Right ventricle myocardium superior (tissue), 1 donor: ENCODE measurements at regions of chr2 and their contacts with region 1.

Region 1: DNA sequence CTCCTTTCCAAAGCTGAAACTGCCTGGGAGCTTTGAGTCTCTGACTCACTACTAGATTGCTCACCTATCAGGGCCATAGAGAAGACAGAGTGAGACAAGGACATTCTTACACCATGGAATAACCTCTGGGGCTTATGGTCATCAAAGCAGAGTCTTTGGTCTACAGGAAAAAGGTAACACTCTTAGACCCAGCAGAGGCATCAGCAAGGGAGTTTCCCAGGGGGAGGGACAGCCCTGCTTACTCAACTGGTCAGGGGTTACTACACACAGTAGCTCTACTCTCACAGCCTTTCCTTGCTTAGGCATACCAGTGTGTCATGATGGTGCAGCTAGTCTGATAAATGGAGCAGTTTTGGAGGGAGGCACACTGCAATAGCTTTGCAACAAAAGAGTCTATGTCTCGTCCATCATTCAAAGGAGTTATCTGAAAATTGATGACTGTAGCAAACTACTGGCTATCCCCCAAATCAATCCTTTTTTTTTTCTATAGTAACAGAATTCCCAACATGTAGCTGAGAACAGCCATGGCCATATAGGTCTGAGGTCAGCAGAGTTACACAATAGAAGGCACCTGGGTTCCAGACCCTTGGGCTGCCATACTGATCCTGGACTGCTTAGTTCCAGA is 22.4 kb upstream of the CD28 start:
- DNase-seq: no peak
- ATAC-seq: no peak

Region 2: DNA sequence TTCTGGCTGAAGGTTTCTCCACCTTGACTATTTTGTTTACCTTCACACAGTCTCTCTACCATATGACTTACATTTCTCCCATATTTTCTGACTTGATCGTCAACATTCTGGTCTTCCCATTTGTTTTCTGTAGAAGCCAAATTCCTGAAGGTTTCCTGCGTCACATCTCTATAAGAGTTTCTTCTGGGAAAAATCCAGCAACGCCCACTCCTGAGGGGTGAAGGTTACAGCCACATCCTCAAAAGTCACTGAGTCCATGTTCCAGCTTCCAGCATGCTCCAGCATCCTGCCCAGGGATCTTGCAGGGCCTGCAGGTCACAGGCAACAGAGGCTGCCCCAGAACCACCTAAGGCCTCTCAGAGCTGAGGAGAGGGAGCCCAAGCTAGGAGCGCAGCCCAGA is 621.9 kb before region 1 on chr2:
- intact Hi-C with region 1: no loop called
- DNase-seq: no peak
- ATAC-seq: no peak

Region 3: DNA sequence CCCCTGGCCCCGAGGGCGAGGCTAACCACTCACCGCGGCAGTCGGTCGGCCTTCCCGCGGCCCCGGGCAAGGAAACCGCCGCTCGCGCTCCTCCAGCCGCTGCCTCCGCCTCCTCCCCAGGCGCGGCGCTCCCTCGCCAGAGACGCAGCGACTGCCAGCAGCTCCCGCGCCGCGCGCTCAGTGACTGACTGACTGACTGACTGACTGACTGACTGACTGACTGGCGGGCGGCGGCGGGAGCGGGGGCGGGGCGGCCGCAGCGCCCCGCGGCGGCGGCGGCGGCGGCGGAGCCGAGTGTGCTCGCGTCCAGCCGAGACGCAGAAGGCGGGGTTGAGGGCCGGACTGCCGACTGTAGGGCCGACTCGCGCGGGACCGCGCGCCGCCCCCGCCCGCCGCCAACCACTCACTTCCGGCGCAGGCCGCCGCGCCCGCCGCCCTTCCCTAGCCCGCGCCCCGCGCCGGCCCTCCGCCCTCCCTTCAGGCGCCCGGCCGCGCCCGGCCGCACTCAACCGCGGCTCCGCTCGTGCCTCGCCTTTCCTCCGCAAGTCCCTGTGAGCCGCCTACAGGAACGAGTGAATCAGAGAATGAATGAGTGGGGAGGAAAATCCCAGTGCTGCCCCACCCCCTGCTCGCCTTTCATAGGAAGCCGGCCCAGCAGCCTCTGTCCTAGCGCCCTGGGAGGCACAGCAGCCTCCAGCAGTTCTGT is 148.8 kb before region 1 on chr2 and contains the start of gene RAPH1:
- intact Hi-C with region 1: loop called (anchors 10 kb)
- DNase-seq: peak; percentile 94
- ATAC-seq: peak; percentile 96
- total RNA-seq, gene RAPH1: 11.9 TPM